Activated T-helper 2 cell treated with anti-CD3 and anti-CD28 coated beads, Interferon-gamma antibody, Interleukin-2, Interleukin-4, amounts not matched to agents 10 μg/mL and 5 μg/mL and 100 μg/mL, durations not matched to agents 14 hours and 24 hours and 36 hours (primary cell): ENCODE measurements at regions of chr4 and their contacts with region 1.

Region 1: GRCh38 chr4:110087070-110087708 is 111.2 kb downstream of the ELOVL6 start:
- DNase-seq: no peak
- H3K4me3 Mint-ChIP-seq: no peak overlapping the region
- H3K27ac Mint-ChIP-seq: peak overlapping the region; percentile 58
- H3K4me1 Mint-ChIP-seq: peaks cover 57% of the 10 kb centered on the region
- H3K27me3 Mint-ChIP-seq: no peaks in the 10 kb centered on the region

Region 2: GRCh38 chr4:110055158-110055768 is 31.9 kb before region 1 on chr4:
- intact Hi-C with region 1: loop called (anchors 1 kb)
- DNase-seq: peak; percentile 16
- H3K4me3 Mint-ChIP-seq: peak overlapping the region; percentile 18
- H3K27ac Mint-ChIP-seq: peak overlapping the region; percentile 48
- H3K4me1 Mint-ChIP-seq: peaks cover 45% of the 10 kb centered on the region
- H3K27me3 Mint-ChIP-seq: no peaks in the 10 kb centered on the region

Region 3: DNA sequence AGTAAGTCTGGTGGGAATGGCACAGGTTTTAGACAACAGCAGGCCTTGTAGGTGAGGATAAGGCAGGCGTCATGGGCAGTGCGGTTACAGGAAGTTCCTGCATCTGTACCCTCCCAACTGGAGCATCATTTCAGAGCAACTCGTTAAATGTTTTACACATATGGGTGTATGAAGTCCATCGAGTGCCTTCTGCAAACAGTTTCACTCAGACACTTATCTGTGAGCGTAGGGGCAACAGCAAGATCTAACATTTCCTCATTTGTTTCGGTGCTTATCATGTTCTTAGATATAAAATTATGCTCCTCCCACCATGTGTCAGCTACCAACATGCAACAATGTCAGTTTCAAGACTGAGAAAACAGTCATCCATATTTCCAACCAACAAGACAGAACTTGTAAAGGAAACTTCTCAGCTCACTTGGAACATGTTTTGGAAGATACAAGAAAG is 41.3 kb after region 1 on chr4:
- intact Hi-C with region 1: loop called (anchors 1 kb)
- DNase-seq: no peak
- H3K4me3 Mint-ChIP-seq: no peak overlapping the region
- H3K27ac Mint-ChIP-seq: no peak overlapping the region
- H3K4me1 Mint-ChIP-seq: peaks cover 33% of the 10 kb centered on the region
- H3K27me3 Mint-ChIP-seq: no peaks in the 10 kb centered on the region

Region 4: GRCh38 chr4:110165382-110166285 is 78.4 kb after region 1 on chr4:
- intact Hi-C with region 1: loop called (anchors 2 kb)
- DNase-seq: peak; percentile 61
- H3K4me3 Mint-ChIP-seq: peak overlapping the region; percentile 72
- H3K27ac Mint-ChIP-seq: peak overlapping the region; percentile 100
- H3K4me1 Mint-ChIP-seq: peaks cover 35% of the 10 kb centered on the region
- H3K27me3 Mint-ChIP-seq: no peaks in the 10 kb centered on the region